ENCODE measurements at regions of chr7 and their contacts with region 1.

Region 1: DNA sequence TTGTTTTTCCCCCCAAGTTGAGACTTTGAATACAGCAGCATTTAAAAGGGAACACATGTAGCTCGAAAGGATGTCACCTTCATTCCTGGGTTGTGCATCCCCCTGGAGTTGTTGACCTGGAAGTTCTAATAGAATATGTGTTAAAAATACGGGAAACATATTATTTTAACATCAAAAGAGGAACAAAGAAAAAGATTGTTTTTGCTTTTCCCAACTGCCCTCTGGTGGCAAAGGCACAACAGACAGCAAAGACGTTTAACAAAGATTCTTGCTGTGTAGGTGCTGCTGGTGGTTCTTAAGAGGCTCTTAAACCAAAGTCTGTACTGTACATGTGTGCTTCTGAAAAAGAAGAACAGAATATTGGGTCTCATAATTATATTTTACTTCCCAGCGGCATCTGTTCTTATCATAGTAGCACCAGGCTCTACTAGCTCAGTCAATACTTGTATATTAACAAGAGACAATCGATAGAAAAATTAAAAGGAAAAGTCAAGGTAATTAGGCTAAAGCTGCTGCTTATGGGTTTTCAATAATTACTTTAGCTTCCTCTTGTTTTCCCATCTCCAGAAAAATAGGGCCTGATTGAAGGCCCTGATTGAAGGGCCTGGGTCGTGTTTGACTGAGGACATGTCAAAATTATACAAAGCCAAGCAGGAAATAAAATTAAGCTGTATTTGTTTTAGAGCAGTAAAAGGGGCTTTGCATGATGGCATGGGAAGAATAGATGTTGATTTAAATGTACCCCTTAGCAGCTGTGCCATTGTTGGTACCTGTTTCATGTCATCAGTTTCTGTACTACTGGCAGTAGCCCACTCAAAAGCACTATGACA is 384.2 kb upstream of the LRGUK start:
- DNase-seq: peak in 1 of 3 donors; percentile 7
- ATAC-seq: no peak
- H3K4me3 ChIP-seq: no peak overlapping the region
- H3K4me1 ChIP-seq: no peaks in the 10 kb centered on the region
- CTCF ChIP-seq: no peak

Region 2: DNA sequence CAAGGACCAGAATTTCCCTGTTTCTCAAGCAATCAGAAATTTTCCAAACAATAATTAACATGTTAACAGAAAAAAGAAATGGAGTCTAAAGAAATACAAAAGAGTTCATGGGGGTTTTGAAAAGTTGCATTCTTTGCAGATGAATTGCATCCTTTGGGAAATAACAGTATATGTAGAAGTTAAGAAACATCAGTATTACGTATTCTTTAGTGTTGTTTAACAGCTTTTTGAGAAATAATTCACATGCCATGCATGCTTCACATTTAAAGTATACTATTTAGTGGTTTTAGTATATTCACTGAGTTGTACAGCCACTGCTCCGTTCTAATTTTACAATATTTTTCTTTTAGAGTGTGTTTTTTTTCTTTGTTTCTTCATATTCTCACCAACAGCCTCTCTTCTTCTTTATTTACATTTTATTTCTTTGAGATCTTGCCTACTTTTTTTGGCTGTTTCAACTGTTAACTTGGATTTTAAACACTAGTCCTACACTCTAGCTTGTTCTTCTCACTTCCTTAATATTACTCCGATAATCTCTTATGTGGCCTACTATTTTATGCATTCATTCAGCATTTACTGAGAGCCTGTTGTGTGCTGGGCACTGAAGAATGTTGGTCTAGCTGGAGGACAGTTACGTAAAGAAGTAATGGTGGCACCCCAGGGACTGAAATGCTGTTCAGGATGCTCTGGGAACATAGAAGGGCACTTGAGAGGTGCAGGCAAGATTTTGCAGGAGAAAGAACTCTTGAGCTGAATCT is 160.0 kb before region 1 on chr7:
- intact Hi-C with region 1: no loop called
- DNase-seq: no peak
- ATAC-seq: no peak
- H3K4me3 ChIP-seq: no peak overlapping the region
- H3K4me1 ChIP-seq: no peaks in the 10 kb centered on the region
- CTCF ChIP-seq: no peak

Region 3: GRCh38 chr7:134084488-134085144 is 341.7 kb after region 1 on chr7:
- intact Hi-C with region 1: loop called in 1 of 2 experiments (anchors 10 kb)
- DNase-seq: peak in 1 of 3 donors; percentile 7
- ATAC-seq: peak; percentile 22
- H3K4me3 ChIP-seq: no peak overlapping the region
- H3K4me1 ChIP-seq: no peaks in the 10 kb centered on the region
- CTCF ChIP-seq: no peak